Sigmoid colon (tissue), 7 donors: ENCODE measurements at regions of chr3 and their contacts with region 1.

Region 1: DNA sequence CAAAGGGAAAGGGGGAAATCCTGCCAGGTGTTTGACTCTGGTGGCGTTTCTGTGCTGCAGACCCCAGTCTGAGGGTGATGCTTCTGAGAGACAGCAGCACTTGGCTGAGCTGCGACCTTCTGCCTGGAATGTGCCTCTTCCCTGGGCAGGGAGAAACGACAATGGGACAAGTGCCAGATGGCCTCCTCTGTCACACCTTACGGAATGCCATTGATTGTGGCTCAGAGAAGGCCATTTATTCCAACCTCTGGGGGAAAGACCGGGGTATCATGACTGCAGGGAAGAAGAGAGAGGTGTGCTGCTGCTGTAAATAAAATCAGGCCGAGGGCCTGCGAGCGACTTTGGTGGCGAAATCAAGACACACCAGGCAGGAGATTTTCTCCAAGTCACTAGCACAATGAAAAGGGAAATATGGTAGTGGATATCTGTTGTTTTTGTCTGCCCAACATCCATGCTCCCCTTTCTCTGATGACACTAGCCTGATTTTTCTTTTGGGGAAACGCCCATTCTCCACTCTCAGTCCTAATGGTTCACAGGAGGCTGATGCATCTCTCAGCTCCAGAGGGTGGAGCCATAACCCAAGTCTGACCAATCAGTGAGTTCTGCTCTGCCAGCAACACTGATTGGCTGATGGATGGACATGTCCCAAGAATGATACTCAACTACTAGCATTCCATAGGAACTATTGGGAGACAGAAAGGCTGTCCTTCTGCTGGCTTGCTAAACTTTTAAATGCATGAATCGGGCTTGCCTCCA is 336.1 kb downstream of the FOXP1 start:
- DNase-seq: no peak
- H3K4me3 ChIP-seq: no peak overlapping the region
- H3K27ac ChIP-seq: peak overlapping the region; percentile 79 to 89 (median 85)
- H3K4me1 ChIP-seq: peaks cover 0 to 41% (median 20%) of the 10 kb centered on the region in 4 donors
- H3K27me3 ChIP-seq: no peaks in the 10 kb centered on the region
- CTCF ChIP-seq: no peak
- EP300 ChIP-seq: no peak
- POLR2A ChIP-seq: no peak

Region 2: DNA sequence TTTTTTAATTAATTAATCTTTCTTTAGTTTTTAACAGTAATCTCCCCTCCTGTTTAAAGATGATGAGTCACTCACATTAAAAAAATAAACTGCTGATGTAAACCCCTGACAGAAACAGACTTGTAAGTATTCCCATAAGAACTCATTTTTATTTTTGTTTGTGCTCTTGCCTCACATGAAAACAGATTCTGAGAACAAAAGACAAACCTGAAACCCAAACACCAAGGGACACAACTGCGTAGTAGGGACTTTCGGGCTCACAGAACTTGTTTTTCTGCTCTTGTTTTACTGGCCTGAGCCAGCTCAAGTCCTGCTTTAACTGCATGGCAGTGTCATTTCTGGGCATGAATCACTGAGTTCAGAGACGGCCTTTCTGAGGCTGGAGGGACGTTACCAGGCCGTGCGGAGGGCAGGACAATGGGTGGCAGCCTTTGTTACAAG is 264.7 kb before region 1 on chr3:
- intact Hi-C with region 1: loop called (anchors 5 kb)
- DNase-seq: peak; percentile 74
- H3K4me3 ChIP-seq: peak overlapping the region in 1 of 4 donors; percentile 2
- H3K27ac ChIP-seq: peak overlapping the region; percentile 74 to 90 (median 84)
- H3K4me1 ChIP-seq: peaks cover 0 to 84% (median 80%) of the 10 kb centered on the region in 4 donors
- H3K27me3 ChIP-seq: no peaks in the 10 kb centered on the region
- CTCF ChIP-seq: no peak
- EP300 ChIP-seq: peak in 1 of 4 donors; percentile 18
- POLR2A ChIP-seq: no peak

Region 3: GRCh38 chr3:70994644-70995043 is 252.8 kb before region 1 on chr3:
- intact Hi-C with region 1: no loop called
- DNase-seq: no peak
- H3K4me3 ChIP-seq: no peak overlapping the region
- H3K27ac ChIP-seq: peak overlapping the region in 1 of 4 donors; percentile 90
- H3K4me1 ChIP-seq: peaks cover 0 to 64% (median 43%) of the 10 kb centered on the region in 4 donors
- H3K27me3 ChIP-seq: no peaks in the 10 kb centered on the region
- CTCF ChIP-seq: no peak
- EP300 ChIP-seq: no peak
- POLR2A ChIP-seq: no peak

Region 4: GRCh38 chr3:71064288-71064955 is 183.0 kb before region 1 on chr3:
- intact Hi-C with region 1: loop called (anchors 2 kb)
- DNase-seq: peak; percentile 74
- H3K4me3 ChIP-seq: peak overlapping the region; percentile 71 to 81 (median 72)
- H3K27ac ChIP-seq: peak overlapping the region; percentile 92 to 99 (median 98)
- H3K4me1 ChIP-seq: peaks cover 0 to 67% (median 60%) of the 10 kb centered on the region in 4 donors
- H3K27me3 ChIP-seq: no peaks in the 10 kb centered on the region
- CTCF ChIP-seq: no peak
- EP300 ChIP-seq: no peak
- POLR2A ChIP-seq: no peak

Region 5: DNA sequence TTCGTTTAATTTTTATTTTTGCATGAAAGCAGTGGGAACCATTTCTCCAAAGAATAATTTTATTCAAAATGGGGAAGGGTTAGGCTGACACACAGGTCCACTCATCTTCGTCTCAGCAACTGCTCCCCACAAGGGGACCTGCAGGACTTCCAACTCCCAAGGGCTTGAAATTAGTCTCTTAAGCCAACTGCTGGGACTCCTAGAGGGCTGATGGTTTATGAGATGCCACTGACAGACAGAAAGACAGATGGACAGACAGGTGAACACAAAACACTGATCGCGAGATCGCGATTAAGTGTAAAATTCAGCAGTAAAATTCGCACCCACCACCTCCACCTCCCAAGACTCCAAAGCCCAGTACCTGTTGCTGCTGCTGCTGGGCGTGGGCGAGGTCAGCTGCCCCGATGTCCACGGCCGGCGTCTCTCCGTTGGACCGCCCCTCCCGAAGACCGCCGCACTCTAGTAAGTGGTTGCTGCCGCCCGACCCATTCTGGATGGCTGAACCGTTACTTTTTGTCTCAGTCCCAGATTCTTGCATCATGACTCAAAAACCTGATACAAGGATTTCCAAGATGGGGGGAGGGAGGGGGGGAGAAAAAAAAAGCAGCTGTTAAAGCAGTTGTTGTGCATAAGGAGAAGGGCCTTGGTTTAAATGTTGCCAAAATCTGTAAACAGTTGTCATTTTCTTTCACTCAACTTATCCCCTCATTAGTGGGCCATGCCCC is 49.4 kb before region 1 on chr3:
- intact Hi-C with region 1: no loop called
- DNase-seq: no peak
- H3K4me3 ChIP-seq: no peak overlapping the region
- H3K27ac ChIP-seq: peak overlapping the region in 2 of 4 donors; percentile 45 to 85
- H3K4me1 ChIP-seq: peaks cover 0 to 39% (median 29%) of the 10 kb centered on the region in 4 donors
- H3K27me3 ChIP-seq: no peaks in the 10 kb centered on the region
- CTCF ChIP-seq: no peak
- EP300 ChIP-seq: no peak
- POLR2A ChIP-seq: no peak

Region 6: DNA sequence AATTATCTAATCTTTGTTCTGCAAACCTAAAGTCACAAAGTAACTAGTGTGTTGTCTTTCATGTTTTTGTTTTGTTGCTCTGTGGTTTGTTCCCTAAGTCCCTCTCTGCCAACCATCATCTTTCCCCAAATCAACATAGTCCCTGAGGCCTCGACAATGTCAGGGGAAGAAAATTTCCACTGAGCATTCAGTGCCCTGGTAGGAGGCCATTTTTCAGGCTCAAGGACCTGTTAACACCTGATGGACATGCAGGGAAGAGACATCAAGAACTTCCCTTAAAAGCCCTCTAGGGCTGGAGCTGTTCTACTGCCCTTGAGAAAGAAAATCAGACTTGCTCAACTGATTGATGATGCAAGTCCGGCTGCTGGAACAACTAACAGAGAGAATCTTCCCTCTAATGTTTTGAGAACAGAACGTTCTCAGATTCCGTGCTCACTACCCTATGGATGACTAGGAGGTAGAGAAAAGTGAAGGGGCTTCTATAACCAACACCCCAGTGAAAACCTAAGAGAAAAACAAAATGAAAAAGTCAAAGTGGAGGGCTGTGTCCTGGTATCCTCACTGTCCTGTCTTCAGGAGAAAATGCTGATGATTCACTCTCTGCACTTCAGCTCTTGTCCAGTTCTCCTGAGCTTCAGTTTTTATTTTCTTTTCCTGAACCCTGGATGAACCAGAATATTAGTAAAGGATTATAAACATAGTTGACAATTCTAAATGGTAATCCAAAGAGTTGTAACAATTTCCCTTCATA is 37.0 kb before region 1 on chr3:
- intact Hi-C with region 1: loop called (anchors 2 kb)
- DNase-seq: peak; percentile 88
- H3K4me3 ChIP-seq: no peak overlapping the region
- H3K27ac ChIP-seq: peak overlapping the region; percentile 74 to 86 (median 84)
- H3K4me1 ChIP-seq: peaks cover 0 to 72% (median 65%) of the 10 kb centered on the region in 4 donors
- H3K27me3 ChIP-seq: no peaks in the 10 kb centered on the region
- CTCF ChIP-seq: peak in 3 of 4 experiments; percentile 21 to 50 (median 38)
- EP300 ChIP-seq: peak in 3 of 4 donors; percentile 70 to 95 (median 82)
- POLR2A ChIP-seq: no peak